Ascending aorta (tissue), 2 donors: ENCODE measurements at regions of chr18 and their contacts with region 1.

Region 1: DNA sequence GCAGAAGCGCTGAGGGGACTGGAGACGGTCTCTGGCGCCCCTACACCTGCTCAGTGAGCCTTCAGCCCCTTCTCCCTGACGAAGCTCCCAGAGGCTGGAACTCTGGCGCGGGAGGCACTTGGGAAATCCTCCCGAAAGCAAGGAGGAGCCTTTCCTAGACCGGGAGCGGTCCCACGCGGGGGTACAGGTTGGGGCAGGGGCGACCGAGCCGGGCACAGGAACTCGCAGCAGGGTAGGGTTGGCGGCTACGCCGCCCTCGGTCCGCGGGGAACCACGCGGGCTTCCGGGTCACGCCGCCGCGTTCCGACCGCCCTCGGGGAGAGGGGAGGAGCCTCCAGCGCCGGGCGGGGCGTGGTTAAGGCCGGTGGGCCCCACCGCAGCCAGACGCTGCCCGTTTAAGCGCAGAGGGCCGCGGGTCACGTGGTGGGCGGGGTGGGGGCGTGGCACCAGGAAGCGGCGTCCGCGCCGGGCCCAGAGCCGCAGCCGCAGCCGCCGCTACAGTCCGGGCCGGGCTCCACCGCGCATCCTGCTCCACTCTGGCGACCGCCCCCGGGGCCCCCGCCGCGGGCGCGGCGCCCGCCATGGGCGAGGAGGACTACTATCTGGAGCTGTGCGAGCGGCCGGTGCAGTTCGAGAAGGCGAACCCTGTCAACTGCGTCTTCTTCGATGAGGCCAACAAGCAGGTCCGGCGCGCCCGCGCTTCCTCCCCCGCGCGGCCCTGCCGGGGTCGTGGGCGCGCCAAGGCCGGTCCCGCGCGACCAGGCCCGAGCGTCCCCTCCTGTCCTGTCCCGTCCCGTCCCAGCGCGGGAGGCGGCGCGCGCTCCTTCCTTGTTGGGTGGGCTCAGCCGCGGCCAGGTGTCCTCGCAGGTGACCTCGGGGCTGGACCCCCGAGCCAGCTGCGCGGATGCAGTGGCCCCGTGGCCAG is at the start of gene RMC1:
- DNase-seq: peak; percentile 76 to 97
- H3K4me3 ChIP-seq: peak within 1 kb of the TSS; percentile 90 to 98
- H3K27ac ChIP-seq: peak within 1 kb of the TSS; percentile 96 to 97
- H3K4me1 ChIP-seq: peaks cover 0 to 24% of the 10 kb centered on the region in 2 donors
- H3K27me3 ChIP-seq: no peaks in the 10 kb centered on the region
- CTCF ChIP-seq: peak in 2 of 3 experiments; percentile 0 to 43
- total RNA-seq, gene RMC1: 20.1 TPM

Region 2: GRCh38 chr18:22933206-22933957 is 569.9 kb before region 1 on chr18 and contains the start of gene RBBP8:
- intact Hi-C with region 1: loop called (anchors 10 kb)
- DNase-seq: peak; percentile 33 to 88
- H3K4me3 ChIP-seq: peak within 1 kb of the TSS; percentile 80 to 86
- H3K27ac ChIP-seq: peak within 1 kb of the TSS; percentile 94 to 97
- H3K4me1 ChIP-seq: peaks cover 0 to 4% of the 10 kb centered on the region in 2 donors
- H3K27me3 ChIP-seq: no peaks in the 10 kb centered on the region
- CTCF ChIP-seq: no peak
- total RNA-seq, gene RBBP8: 1.9 TPM

Region 3: GRCh38 chr18:23237524-23238151 is 265.7 kb before region 1 on chr18:
- intact Hi-C with region 1: loop called (anchors 5 kb)
- DNase-seq: peak; percentile 30 to 84
- H3K4me3 ChIP-seq: peak overlapping the region; percentile 38 to 58
- H3K27ac ChIP-seq: peak overlapping the region; percentile 91 to 92
- H3K4me1 ChIP-seq: peaks cover 0 to 23% of the 10 kb centered on the region in 2 donors
- H3K27me3 ChIP-seq: no peaks in the 10 kb centered on the region
- CTCF ChIP-seq: peak; percentile 44 to 48 (median 44)

Region 4: GRCh38 chr18:23306822-23307221 is 196.5 kb before region 1 on chr18:
- intact Hi-C with region 1: no loop called
- DNase-seq: peak in 1 of 2 donors; percentile 64
- H3K4me3 ChIP-seq: no peak overlapping the region
- H3K27ac ChIP-seq: peak overlapping the region; percentile 35 to 37
- H3K4me1 ChIP-seq: peaks cover under 1 to 8% of the 10 kb centered on the region in 2 donors
- H3K27me3 ChIP-seq: no peaks in the 10 kb centered on the region
- CTCF ChIP-seq: no peak

Region 5: GRCh38 chr18:23452728-23453679 is 50.3 kb before region 1 on chr18 and contains the start of gene RIOK3:
- intact Hi-C with region 1: loop called (anchors 1 kb)
- DNase-seq: peak; percentile 91 to 99
- H3K4me3 ChIP-seq: peak within 1 kb of the TSS; percentile 79 to 89
- H3K27ac ChIP-seq: peak within 1 kb of the TSS; percentile 91 to 92
- H3K4me1 ChIP-seq: peaks cover 3 to 32% of the 10 kb centered on the region in 2 donors
- H3K27me3 ChIP-seq: no peaks in the 10 kb centered on the region
- CTCF ChIP-seq: no peak
- total RNA-seq, gene RIOK3: 9.3 TPM

Region 6: DNA sequence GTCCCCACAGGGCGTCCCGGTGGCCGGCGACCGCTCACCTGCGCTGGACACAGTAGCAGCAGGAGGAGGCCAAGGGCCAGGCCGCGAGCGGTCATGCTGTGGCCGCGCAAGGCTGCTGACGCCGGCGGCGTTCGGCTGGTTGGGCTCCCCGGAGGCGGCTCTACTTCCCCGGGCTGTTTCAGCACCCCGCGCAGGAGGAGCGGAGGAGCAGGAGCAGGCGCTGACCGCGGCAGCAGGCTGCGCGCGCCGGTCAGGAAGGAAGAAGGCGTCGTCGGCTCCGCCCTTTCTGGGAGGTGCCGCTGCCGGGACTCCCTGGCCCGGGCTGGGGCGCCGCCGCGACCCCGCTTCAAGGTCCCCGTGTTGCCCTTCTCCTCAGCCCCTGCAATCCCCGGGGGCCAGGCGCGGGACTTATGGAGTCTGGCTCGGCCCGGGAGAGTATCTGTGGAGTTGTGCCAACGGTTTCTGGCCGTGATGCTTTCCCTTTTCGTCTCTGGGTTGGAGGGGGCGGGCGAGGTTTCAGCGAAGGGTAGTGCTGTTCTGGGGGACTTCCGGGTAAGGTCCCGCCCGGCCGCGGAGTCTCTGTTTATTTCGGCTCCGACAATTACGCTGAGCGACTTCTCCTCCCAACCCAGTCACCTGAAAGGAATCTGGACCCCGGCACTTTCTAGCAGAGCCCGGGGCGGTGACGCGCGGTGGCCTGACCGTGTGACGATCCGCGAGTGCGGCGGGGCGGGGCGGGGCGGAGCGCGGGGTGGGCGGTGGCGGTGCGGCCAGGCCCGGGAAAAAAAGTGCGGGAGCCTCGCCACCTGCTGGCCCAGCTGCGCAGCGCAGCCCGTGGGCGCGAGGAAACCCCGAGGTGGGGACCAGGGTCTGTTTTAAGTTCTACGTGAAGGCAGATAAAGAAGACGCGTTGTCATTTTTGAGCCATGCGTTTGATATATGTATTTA is 83.2 kb after region 1 on chr18 and contains the start of gene NPC1:
- intact Hi-C with region 1: loop called (anchors 1 kb)
- DNase-seq: peak; percentile 81 to 97
- H3K4me3 ChIP-seq: peak within 1 kb of the TSS; percentile 84 to 87
- H3K27ac ChIP-seq: peak within 1 kb of the TSS; percentile 98 to 100
- H3K4me1 ChIP-seq: peaks cover 10 to 29% of the 10 kb centered on the region in 2 donors
- H3K27me3 ChIP-seq: no peaks in the 10 kb centered on the region
- CTCF ChIP-seq: peak; percentile 90 to 96 (median 92)
- total RNA-seq, gene NPC1: 21.6 TPM